ENCODE measurements at regions of chr22 and their contacts with region 1.

Region 1: DNA sequence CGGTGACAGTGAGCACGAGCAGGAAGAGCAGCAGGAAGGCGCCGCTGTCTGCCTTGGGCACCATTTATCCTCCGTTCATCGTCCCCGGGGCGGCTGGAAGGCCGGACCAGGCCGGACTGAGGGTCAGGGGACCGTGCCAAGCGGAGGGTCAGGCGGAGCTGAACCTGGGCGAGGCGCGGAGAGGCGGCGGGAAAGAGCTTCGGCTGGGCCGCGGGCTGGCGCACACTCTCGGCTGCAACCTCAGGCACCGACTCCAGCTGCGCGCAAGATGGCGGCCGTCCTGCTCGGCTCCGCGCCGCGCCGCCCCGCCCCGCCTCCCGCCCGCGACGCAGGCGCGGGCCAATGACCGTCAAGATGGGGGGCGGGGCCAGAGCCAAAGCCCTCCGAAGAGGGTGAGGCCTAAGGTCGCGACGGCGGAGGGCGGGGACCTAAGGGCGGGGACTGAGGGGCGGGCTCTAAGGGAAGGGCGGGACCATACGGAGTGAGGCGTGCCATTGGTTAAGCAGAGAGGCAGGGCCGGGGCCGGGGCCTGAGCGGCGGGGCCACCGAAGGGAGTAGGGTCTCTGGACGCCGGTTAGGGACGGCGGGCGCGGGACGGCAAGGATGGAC is at the start of gene DGCR2:
- DNase-seq: peak; percentile 99
- ATAC-seq: peak; percentile 97
- H3K4me3 Mint-ChIP-seq: peak within 1 kb of the TSS; percentile 80
- H3K27ac Mint-ChIP-seq: peak within 1 kb of the TSS; percentile 58
- H3K4me1 Mint-ChIP-seq: peaks cover 42% of the 10 kb centered on the region
- H3K27me3 Mint-ChIP-seq: no peaks in the 10 kb centered on the region
- total RNA-seq, gene DGCR2: 23.7 to 27.5 TPM

Region 2: DNA sequence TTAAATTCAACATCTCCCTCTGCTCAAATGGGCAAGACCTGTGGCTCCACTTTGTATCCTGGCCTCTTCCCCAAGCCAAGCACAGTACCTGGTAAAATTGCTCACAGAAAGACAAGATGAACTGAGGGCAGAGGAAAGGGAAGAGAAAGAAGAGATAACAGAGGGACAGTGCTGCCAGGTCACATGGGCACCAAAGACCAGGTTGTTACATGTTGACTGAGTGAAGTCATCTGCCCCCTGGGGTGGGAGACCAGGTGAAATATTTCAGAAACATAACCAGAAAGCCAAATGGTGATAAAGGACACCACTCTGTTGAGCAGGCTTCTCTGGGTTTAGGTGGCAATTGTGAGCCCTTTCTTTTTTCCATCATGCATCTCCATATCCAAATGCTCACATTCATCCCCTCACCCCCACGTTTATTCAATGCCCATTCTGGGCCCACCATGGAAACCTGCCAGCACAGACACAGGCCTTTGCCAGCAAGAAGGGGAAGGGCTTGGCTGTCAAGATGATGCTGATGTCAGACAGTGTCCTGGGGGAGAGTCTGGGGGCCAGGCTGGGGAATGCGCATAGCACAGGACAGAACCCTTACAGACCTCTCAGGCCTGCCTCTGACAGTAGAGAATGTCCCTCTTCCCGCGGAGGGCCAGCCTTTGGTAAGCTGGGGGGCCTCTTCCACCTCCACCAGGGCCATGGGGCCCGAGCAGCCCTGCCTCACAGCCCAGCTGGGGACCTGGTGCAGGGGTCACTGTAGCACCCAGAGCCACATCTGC is 51.7 kb before region 1 on chr22:
- CTCF ChIA-PET with region 1: no interaction called
- POLR2A ChIA-PET with region 1: no interaction called
- intact Hi-C with region 1: loop called in 1 of 2 experiments (anchors 10 kb)
- DNase-seq: no peak
- ATAC-seq: no peak
- H3K4me3 Mint-ChIP-seq: no peak overlapping the region
- H3K27ac Mint-ChIP-seq: no peak overlapping the region
- H3K4me1 Mint-ChIP-seq: peaks cover 11% of the 10 kb centered on the region
- H3K27me3 Mint-ChIP-seq: no peaks in the 10 kb centered on the region

Region 3: DNA sequence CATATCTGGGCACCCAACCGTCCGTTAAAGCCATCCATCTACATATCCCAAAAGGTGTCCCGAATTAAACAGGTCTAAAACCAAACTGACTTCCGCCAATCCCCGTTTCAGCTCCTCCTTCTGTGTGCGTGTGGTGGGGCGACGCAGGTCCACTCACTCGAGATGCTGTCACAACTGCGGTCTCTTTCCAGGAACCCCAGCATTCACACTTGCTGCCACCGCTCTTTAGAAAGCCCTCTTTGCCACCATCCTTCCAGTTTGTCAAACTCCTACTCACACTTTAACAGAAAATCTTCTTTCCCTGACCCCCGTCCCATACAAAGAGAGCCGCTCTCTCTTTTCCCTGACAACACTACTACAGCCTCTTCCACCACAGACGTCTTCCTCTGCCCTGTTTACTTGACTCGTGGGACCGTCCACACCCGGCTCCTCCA is 21.7 kb after region 1 on chr22:
- CTCF ChIA-PET with region 1: interaction called, 5 read pairs
- POLR2A ChIA-PET with region 1: interaction called, 14 read pairs
- intact Hi-C with region 1: loop called (anchors 1 kb)
- DNase-seq: peak; percentile 69
- ATAC-seq: peak; percentile 37
- H3K4me3 Mint-ChIP-seq: peak overlapping the region; percentile 95
- H3K27ac Mint-ChIP-seq: peak overlapping the region; percentile 96
- H3K4me1 Mint-ChIP-seq: peaks cover 18% of the 10 kb centered on the region
- H3K27me3 Mint-ChIP-seq: peaks cover 5% of the 10 kb centered on the region

Region 4: DNA sequence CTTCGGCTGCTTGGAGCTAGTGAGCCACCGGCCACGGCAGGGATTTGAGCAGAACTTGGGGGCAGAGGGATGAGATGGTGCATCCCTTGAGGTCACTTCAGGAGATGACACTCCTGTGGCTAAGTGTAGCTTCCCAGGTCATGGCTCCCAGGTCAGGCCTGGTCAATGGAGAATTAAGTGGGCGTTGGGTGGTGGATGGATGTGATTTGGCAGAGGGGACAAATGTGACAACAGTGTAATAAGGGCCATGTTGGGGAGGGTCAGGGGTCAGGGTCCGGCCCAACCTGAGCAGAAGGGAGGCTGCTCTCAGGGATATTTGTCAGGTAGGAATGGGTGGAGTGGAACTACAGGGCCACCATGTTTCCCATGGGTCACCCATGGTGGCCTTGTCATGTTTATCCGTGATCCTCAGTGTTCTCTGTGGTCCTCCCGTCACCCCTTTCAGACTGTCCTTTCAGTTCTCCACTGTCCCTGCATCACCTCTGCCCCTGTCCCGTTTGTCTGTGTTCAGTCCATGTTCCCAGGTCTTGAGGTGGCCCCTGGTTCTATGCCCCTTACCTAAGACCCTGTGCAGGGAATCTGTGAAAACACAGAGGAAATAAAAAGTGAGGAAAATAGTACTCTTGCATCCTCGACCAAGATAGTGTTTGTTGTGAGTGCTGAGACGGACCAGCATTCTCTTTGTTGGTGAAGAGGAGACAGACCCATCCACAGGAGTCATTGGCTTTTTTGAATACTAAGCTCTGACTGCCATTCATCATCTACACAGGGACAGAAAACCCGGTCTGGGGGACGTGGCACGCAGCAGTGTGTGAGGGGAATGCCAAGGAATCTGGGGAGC is 50.2 kb after region 1 on chr22:
- CTCF ChIA-PET with region 1: no interaction called
- POLR2A ChIA-PET with region 1: no interaction called
- intact Hi-C with region 1: no loop called
- DNase-seq: no peak
- ATAC-seq: no peak
- H3K4me3 Mint-ChIP-seq: peak overlapping the region; percentile 90
- H3K27ac Mint-ChIP-seq: peak overlapping the region; percentile 78
- H3K4me1 Mint-ChIP-seq: peaks cover 41% of the 10 kb centered on the region
- H3K27me3 Mint-ChIP-seq: peaks cover 21% of the 10 kb centered on the region

Region 5: GRCh38 chr22:19195796-19196731 is 73.8 kb after region 1 on chr22:
- CTCF ChIA-PET with region 1: no interaction called
- POLR2A ChIA-PET with region 1: no interaction called
- intact Hi-C with region 1: no loop called
- DNase-seq: no peak
- ATAC-seq: no peak
- H3K4me3 Mint-ChIP-seq: no peak overlapping the region
- H3K27ac Mint-ChIP-seq: no peak overlapping the region
- H3K4me1 Mint-ChIP-seq: peaks cover 5% of the 10 kb centered on the region
- H3K27me3 Mint-ChIP-seq: no peaks in the 10 kb centered on the region

Region 6: GRCh38 chr22:19447388-19448075 is 325.3 kb after region 1 on chr22 and contains the start of gene C22orf39:
- CTCF ChIA-PET with region 1: no interaction called
- POLR2A ChIA-PET with region 1: interaction called, 8 read pairs
- intact Hi-C with region 1: loop called in 1 of 2 experiments (anchors 1 kb)
- DNase-seq: peak; percentile 91
- ATAC-seq: peak; percentile 83
- H3K4me3 Mint-ChIP-seq: peak within 1 kb of the TSS; percentile 87
- H3K27ac Mint-ChIP-seq: peak within 1 kb of the TSS; percentile 98
- H3K4me1 Mint-ChIP-seq: peaks cover 36% of the 10 kb centered on the region
- H3K27me3 Mint-ChIP-seq: no peaks in the 10 kb centered on the region
- total RNA-seq, gene C22orf39: 21.9 to 22.2 TPM

Region 7: DNA sequence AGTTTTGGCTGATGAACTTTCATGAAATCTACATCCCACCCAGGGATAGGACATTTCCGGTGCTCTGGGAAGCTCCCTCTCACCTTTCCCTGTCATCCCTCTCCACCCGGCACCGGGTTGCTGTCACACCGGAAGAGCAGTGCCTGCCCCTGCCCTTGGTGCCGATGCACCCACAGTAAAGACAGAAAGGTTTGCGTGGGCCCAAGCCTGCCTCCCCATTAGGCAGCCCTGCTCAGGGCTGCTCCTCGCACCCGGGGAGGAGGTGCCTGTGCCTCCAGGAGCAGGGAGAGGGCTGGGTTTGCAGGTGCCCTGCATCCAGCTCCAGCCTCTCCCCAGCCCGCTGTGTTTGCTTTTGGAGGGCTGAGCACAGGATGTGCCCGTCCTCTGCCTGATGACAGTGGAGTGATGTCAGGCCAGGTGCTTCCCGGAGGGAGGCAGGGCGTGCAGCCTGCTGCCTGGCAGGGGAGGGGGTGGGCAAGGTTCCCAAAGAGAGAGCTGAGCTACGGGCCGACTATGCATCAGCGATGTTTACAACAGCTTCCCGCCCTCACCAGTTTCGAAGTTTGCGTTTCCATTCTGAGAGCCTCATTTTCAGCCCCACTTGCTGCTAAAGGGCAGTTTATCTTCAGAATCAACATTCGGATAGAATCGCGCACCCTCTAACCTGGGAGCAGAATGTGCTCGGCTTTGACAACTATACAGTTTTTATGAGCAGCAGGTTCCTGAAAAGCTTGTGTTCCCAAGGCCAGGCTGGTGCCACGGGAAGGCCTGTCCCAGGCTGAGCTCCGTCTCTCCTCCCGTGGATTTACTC is 485.1 kb after region 1 on chr22:
- CTCF ChIA-PET with region 1: no interaction called
- POLR2A ChIA-PET with region 1: no interaction called
- intact Hi-C with region 1: loop called in 1 of 2 experiments (anchors 1 kb)
- DNase-seq: peak; percentile 85
- ATAC-seq: peak; percentile 80
- H3K4me3 Mint-ChIP-seq: peak overlapping the region; percentile 50
- H3K27ac Mint-ChIP-seq: peak overlapping the region; percentile 82
- H3K4me1 Mint-ChIP-seq: peaks cover 64% of the 10 kb centered on the region
- H3K27me3 Mint-ChIP-seq: no peaks in the 10 kb centered on the region

Measured in activated CD4-positive, alpha-beta T cell treated with anti-CD3 and anti-CD28 coated beads for 36 hours (primary cell).